Activated T-helper 1 cell treated with anti-CD3 and anti-CD28 coated beads, Interleukin-12 subunit alpha, Interleukin-12 subunit beta, Interleukin-2, Interleukin-4 antibody, amounts not matched to agents 30 ng/mL and 10 ng/mL and 1 ng/mL, durations not matched to agents 14 hours and 24 hours and 36 hours (primary cell): ENCODE measurements at regions of chr13 and their contacts with region 1.

Region 1: GRCh38 chr13:99542788-99543406 is 41.6 kb downstream of the TM9SF2 start:
- DNase-seq: peak; percentile 53
- H3K4me3 Mint-ChIP-seq: peak overlapping the region; percentile 46
- H3K27ac Mint-ChIP-seq: peak overlapping the region; percentile 35
- H3K4me1 Mint-ChIP-seq: peaks cover 43% of the 10 kb centered on the region
- H3K27me3 Mint-ChIP-seq: no peaks in the 10 kb centered on the region

Region 2: DNA sequence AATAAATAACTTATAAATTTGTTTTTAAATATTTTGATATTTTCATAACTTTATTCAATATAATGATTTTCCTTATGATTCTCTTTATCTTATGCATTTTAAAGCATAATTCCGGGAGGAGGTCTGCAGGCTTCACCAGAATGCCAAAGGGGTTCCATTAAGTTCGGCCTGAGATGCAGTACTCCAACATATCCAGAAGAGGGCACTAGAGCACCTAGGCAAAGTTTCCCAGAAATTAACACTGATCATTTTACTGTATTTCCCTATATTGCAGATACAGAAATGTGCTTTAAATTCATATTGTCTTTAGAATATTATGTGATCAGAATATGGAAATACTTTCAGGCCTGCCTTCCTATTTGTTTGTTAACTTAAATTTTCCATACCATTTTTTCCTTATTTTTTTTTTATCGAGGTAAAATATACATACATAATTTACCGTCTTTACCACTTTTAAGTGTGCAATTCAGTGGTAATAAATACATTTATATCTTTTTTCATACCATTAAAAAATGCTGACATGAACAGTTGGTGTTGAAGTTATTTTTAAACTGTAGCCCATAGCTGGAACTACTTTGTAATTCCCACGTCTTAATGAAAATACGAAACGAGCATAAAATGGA is 100.5 kb before region 1 on chr13:
- intact Hi-C with region 1: loop called (anchors 1 kb)
- DNase-seq: peak; percentile 49
- H3K4me3 Mint-ChIP-seq: no peak overlapping the region
- H3K27ac Mint-ChIP-seq: no peak overlapping the region
- H3K4me1 Mint-ChIP-seq: peaks cover 6% of the 10 kb centered on the region
- H3K27me3 Mint-ChIP-seq: peaks cover 34% of the 10 kb centered on the region

Region 3: GRCh38 chr13:99464441-99464949 is 78.4 kb before region 1 on chr13:
- intact Hi-C with region 1: no loop called
- DNase-seq: no peak
- H3K4me3 Mint-ChIP-seq: peak overlapping the region; percentile 43
- H3K27ac Mint-ChIP-seq: peak overlapping the region; percentile 87
- H3K4me1 Mint-ChIP-seq: peaks cover 33% of the 10 kb centered on the region
- H3K27me3 Mint-ChIP-seq: peaks cover 3% of the 10 kb centered on the region

Region 4: GRCh38 chr13:99528547-99528946 is 14.3 kb before region 1 on chr13:
- intact Hi-C with region 1: loop called (anchors 2 kb)
- DNase-seq: no peak
- H3K4me3 Mint-ChIP-seq: no peak overlapping the region
- H3K27ac Mint-ChIP-seq: no peak overlapping the region
- H3K4me1 Mint-ChIP-seq: peaks cover 35% of the 10 kb centered on the region
- H3K27me3 Mint-ChIP-seq: no peaks in the 10 kb centered on the region

Region 5: GRCh38 chr13:99556867-99557443 is 14.1 kb after region 1 on chr13:
- intact Hi-C with region 1: loop called (anchors 2 kb)
- DNase-seq: no peak
- H3K4me3 Mint-ChIP-seq: no peak overlapping the region
- H3K27ac Mint-ChIP-seq: peak overlapping the region; percentile 15
- H3K4me1 Mint-ChIP-seq: peaks cover 13% of the 10 kb centered on the region
- H3K27me3 Mint-ChIP-seq: no peaks in the 10 kb centered on the region

Region 6: GRCh38 chr13:99606324-99607066 is 63.6 kb after region 1 on chr13:
- intact Hi-C with region 1: loop called (anchors 2 kb)
- DNase-seq: peak; percentile 82
- H3K4me3 Mint-ChIP-seq: peak within 1 kb of the TSS; percentile 89
- H3K27ac Mint-ChIP-seq: peak within 1 kb of the TSS; percentile 81
- H3K4me1 Mint-ChIP-seq: peaks cover 29% of the 10 kb centered on the region
- H3K27me3 Mint-ChIP-seq: peaks cover 4% of the 10 kb centered on the region

Region 7: DNA sequence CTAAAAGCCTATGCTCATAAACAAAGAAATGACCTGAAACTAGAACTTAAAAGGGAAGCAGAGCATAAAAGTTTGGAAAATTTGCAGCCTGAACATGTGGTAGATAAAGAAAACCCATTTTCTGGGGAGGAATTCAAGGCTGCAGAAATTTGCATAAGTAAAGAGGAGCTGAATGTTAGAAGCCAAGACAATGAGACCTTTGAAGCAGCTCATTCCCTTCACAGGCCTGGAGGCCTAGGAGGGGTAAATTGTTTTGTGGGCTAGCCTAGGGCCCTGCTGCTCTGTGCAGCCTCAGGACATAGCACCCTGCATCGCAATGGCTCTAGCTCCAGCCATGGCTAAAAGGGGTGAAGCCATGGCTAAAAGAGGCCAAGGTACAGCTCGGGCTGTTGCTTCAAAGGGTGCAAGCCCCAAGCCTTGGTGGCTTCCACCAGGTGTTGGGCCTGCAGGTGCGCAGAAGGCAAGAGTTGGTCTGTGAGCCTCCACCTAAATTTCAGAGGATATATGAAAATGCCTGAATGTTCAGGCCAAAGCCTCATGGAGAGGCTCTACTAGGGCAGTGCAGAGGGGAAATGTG is 477.0 kb after region 1 on chr13:
- intact Hi-C with region 1: no loop called
- DNase-seq: no peak
- H3K4me3 Mint-ChIP-seq: no peak overlapping the region
- H3K27ac Mint-ChIP-seq: no peak overlapping the region
- H3K4me1 Mint-ChIP-seq: no peaks in the 10 kb centered on the region
- H3K27me3 Mint-ChIP-seq: peaks cover 8% of the 10 kb centered on the region